ENCODE measurements at regions of chr10 and their contacts with region 1.

Region 1: GRCh38 chr10:125700355-125700911 is 17.5 kb upstream of the TEX36 start:
- DNase-seq: no peak
- ATAC-seq: no peak
- H3K4me3 ChIP-seq: no peak overlapping the region
- H3K27ac ChIP-seq: no peak overlapping the region
- H3K4me1 ChIP-seq: no peaks in the 10 kb centered on the region
- H3K27me3 ChIP-seq: peaks cover 0 to 25% of the 10 kb centered on the region in 2 experiments; a peak in 2 of 5 replicates
- CTCF ChIP-seq: peak in 2 of 3 experiments; percentile 7 to 38; a peak in 1 of 6 replicates
- EP300 ChIP-seq: no peak
- POLR2A ChIP-seq: no peak
- RAD21 ChIP-seq: peak in 1 of 2 experiments; percentile 56; a peak in 2 of 4 replicates

Region 2: GRCh38 chr10:125316449-125316848 is 384.0 kb before region 1 on chr10:
- CTCF ChIA-PET with region 1: no interaction called
- POLR2A ChIA-PET with region 1: no interaction called
- in situ Hi-C with region 1: no loop called
- intact Hi-C with region 1: no loop called
- DNase-seq: no peak
- ATAC-seq: no peak
- H3K4me3 ChIP-seq: no peak overlapping the region
- H3K27ac ChIP-seq: no peak overlapping the region
- H3K4me1 ChIP-seq: no peaks in the 10 kb centered on the region
- H3K27me3 ChIP-seq: no peaks in the 10 kb centered on the region
- CTCF ChIP-seq: no peak
- EP300 ChIP-seq: no peak
- POLR2A ChIP-seq: no peak
- RAD21 ChIP-seq: no peak

Region 3: GRCh38 chr10:125592897-125593296 is 107.5 kb before region 1 on chr10:
- CTCF ChIA-PET with region 1: no interaction called
- POLR2A ChIA-PET with region 1: no interaction called
- in situ Hi-C with region 1: no loop called
- intact Hi-C with region 1: no loop called
- DNase-seq: no peak
- ATAC-seq: no peak
- H3K4me3 ChIP-seq: no peak overlapping the region
- H3K27ac ChIP-seq: no peak overlapping the region
- H3K4me1 ChIP-seq: no peaks in the 10 kb centered on the region; a peak in 1 of 5 replicates
- H3K27me3 ChIP-seq: no peaks in the 10 kb centered on the region; a peak in 1 of 5 replicates
- CTCF ChIP-seq: no peak
- EP300 ChIP-seq: no peak
- POLR2A ChIP-seq: no peak
- RAD21 ChIP-seq: no peak

Region 4: DNA sequence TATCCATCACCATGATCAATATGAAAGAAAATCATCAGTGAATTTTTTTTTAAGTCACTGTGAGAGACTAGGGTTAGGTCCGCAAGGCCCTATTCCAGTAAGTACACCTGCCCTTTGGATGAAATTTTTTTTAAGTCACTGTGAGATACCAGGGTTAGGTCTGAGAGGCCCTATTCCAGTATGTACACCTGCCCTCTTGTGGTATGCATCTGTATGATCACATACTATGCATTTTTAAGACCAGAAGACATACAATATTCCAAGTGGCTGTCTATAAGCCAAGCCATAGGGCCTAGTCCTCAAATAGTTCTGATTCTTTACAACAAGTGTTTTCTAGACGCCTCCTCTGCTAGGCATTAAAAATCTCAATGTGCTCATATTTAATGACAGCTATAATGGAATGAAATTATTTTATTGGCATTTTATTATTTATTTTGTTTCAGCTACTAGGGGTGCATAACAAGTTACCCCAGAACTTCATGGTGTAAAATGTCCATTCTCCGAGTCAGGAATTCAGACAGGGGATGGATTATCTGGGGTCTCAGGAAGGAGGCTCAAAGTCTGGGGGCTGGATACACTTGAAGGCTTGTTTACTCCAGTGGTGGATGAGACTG is 70.6 kb before region 1 on chr10:
- CTCF ChIA-PET with region 1: no interaction called
- POLR2A ChIA-PET with region 1: no interaction called
- in situ Hi-C with region 1: no loop called
- intact Hi-C with region 1: loop called (anchors 2 kb)
- DNase-seq: peak; percentile 38 to 50 (median 46)
- ATAC-seq: peak; percentile 95
- H3K4me3 ChIP-seq: no peak overlapping the region
- H3K27ac ChIP-seq: no peak overlapping the region
- H3K4me1 ChIP-seq: no peaks in the 10 kb centered on the region
- H3K27me3 ChIP-seq: peaks cover 13 to 46% of the 10 kb centered on the region in 2 experiments; a peak in 4 of 5 replicates
- CTCF ChIP-seq: peak; percentile 44 to 57 (median 54); a peak in 4 of 6 replicates
- EP300 ChIP-seq: no peak
- POLR2A ChIP-seq: no peak
- RAD21 ChIP-seq: peak; percentile 55 to 78